ENCODE measurements at regions of chr10 and their contacts with region 1.

Region 1: DNA sequence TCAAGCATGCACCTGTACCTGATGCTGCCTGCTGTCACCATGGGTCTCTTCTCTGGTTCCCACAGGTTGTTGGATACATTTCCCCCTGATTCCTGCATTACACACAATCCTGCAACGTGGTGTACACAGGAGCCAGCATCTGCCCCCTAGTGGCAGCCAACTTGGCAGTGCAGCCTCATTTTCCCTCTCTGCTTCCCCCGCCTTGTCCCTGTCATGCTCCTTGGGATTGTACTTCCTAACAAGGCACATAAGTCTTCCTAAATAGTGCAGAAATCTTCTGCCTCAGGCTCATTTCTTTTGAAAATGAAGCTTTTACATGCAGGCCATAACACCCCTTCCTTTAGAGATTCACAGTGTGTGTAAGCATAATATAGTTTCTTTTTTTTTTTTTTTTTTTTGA is 387.5 kb downstream of the CCSER2 start:
- DNase-seq: peak; percentile 34 to 76
- H3K4me3 ChIP-seq: no peak overlapping the region
- H3K27ac ChIP-seq: no peak overlapping the region
- H3K4me1 ChIP-seq: no peaks in the 10 kb centered on the region
- H3K27me3 ChIP-seq: no peaks in the 10 kb centered on the region
- CTCF ChIP-seq: peak; percentile 93 to 100 (median 99)
- EP300 ChIP-seq: no peak
- POLR2A ChIP-seq: no peak
- RAD21 ChIP-seq: peak; percentile 77 to 78

Region 2: DNA sequence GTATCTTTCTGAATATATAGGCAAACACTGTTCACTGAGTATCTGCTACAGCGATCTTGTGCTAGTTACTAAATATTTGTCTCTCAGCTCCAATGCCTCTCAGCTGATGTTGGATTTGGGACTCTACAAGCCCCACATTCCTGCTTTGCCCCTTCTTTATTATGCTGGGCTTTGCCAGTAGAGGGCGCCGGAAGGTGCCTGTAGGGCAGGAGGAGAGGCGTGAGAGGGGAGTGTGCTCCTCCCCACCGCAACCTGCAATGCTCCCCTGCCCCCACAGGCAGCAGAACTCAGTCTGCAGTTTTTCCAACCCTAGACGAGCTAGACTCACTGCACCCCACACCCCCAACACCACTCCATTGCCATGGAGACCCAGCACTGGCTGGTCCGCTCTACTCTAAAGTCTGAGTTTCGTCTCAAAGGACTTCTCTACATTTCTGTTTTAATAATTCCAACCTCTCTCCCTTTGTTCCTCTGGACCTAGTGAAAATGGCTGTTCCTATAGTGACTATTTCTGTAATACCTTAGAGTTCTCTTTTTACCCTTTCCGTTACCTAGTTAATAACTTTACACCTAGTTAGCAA is 49.9 kb before region 1 on chr10:
- CTCF ChIA-PET with region 1: interaction called, 36 read pairs
- POLR2A ChIA-PET with region 1: no interaction called
- DNase-seq: peak; percentile 61 to 89
- H3K4me3 ChIP-seq: 0 out of 8 replicates have a peak overlapping the region, but pooled peaks of 1 of the 4 experiments have one; percentile 8
- H3K27ac ChIP-seq: no peak overlapping the region
- H3K4me1 ChIP-seq: peaks cover 0 to 4% (median 0%) of the 10 kb centered on the region in 4 experiments; a peak in 1 of 7 replicates
- H3K27me3 ChIP-seq: no peaks in the 10 kb centered on the region; a peak in 1 of 7 replicates
- CTCF ChIP-seq: peak; percentile 83 to 93 (median 93)
- EP300 ChIP-seq: peak in 1 of 2 experiments; percentile 29; a peak in 1 of 3 replicates
- POLR2A ChIP-seq: no peak
- RAD21 ChIP-seq: peak; percentile 80 to 81

Region 3: DNA sequence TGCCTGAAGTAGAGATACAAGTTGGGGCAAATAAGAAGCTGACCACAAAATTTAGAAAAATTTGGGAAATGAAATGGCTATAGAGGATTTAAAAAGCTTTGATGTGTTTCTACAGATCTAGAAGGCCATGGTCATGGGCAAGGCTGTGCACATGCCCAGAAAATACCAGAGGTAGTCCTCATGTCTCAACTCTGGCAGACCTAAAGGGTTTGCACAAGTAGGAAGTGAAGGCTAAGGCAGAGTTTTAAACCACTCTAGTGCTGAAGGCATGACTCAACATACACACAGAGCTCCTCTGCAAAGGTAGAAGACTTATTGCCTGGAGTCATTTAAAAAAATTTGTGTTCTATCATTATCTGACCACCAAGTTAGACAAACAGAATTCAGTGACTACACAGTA is 22.9 kb before region 1 on chr10:
- CTCF ChIA-PET with region 1: interaction called, 12 read pairs
- POLR2A ChIA-PET with region 1: no interaction called
- DNase-seq: no peak
- H3K4me3 ChIP-seq: no peak overlapping the region
- H3K27ac ChIP-seq: no peak overlapping the region
- H3K4me1 ChIP-seq: no peaks in the 10 kb centered on the region
- H3K27me3 ChIP-seq: no peaks in the 10 kb centered on the region
- CTCF ChIP-seq: no peak
- EP300 ChIP-seq: no peak
- POLR2A ChIP-seq: no peak
- RAD21 ChIP-seq: no peak

Region 4: GRCh38 chr10:84727398-84727797 is 11.5 kb after region 1 on chr10:
- CTCF ChIA-PET with region 1: interaction called, 10 read pairs
- POLR2A ChIA-PET with region 1: no interaction called
- DNase-seq: peak in 1 of 2 experiments; percentile 5
- H3K4me3 ChIP-seq: no peak overlapping the region
- H3K27ac ChIP-seq: no peak overlapping the region
- H3K4me1 ChIP-seq: peaks cover 0 to 2% (median 0%) of the 10 kb centered on the region in 4 experiments; a peak in 1 of 7 replicates
- H3K27me3 ChIP-seq: no peaks in the 10 kb centered on the region
- CTCF ChIP-seq: no peak
- EP300 ChIP-seq: no peak
- POLR2A ChIP-seq: no peak
- RAD21 ChIP-seq: no peak